A673 (cell line): ENCODE measurements at regions of chr22 and their contacts with region 1.

Region 1: DNA sequence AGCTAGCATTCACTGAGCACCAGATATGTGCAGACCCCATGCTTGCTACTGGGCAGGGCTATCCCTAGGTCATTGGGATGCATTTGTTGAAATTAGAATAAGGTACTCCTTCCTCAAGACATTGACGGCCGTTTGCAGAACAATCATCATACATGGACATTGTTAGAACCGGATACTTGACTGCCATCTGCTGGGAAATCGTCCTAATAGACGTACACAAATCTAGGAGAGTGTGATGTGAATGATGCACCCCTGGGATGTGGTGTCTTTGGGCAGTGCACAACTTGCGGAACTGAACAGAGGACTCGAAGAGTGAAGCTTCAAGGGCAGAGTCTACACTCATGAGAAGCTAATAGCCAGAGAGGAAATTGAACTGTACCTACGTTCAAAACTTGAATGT is 35.9 kb downstream of the MYO18B start:
- DNase-seq: peak; percentile 66
- H3K4me3 ChIP-seq: no peak overlapping the region
- H3K27ac ChIP-seq: no peak overlapping the region
- H3K4me1 ChIP-seq: peaks cover 5% of the 10 kb centered on the region
- H3K27me3 ChIP-seq: no peaks in the 10 kb centered on the region
- CTCF ChIP-seq: peak; percentile 53

Region 2: DNA sequence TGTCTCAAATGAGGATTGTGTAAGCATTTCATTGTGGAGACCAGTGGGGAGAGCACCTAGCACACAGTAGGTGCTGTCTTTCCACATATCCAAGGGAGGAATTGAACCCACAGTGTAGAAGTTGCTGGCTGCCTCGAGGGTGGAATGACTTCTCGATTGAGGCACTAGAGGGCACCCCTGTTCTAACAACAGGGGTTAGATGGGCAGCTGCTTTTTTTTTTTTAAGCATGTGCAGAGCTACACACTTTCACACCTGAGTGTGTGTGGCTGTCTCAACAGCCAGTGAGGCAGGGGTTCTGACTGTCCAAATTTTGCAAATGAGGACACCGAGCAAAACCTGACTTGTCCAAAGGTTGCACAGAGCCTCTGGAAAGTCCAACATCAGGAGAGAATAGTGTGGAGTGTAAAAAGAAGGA is 696.5 kb before region 1 on chr22:
- CTCF ChIA-PET with region 1: no interaction called
- POLR2A ChIA-PET with region 1: no interaction called
- intact Hi-C with region 1: no loop called
- DNase-seq: peak; percentile 47
- H3K4me3 ChIP-seq: no peak overlapping the region
- H3K27ac ChIP-seq: no peak overlapping the region
- H3K4me1 ChIP-seq: no peaks in the 10 kb centered on the region
- H3K27me3 ChIP-seq: no peaks in the 10 kb centered on the region
- CTCF ChIP-seq: peak; percentile 65

Region 3: GRCh38 chr22:25235547-25236290 is 542.2 kb before region 1 on chr22:
- CTCF ChIA-PET with region 1: no interaction called
- POLR2A ChIA-PET with region 1: no interaction called
- intact Hi-C with region 1: loop called (anchors 10 kb)
- DNase-seq: peak; percentile 84
- H3K4me3 ChIP-seq: no peak overlapping the region
- H3K27ac ChIP-seq: no peak overlapping the region
- H3K4me1 ChIP-seq: no peaks in the 10 kb centered on the region
- H3K27me3 ChIP-seq: no peaks in the 10 kb centered on the region
- CTCF ChIP-seq: peak; percentile 88

Region 4: GRCh38 chr22:25362215-25362882 is 415.5 kb before region 1 on chr22:
- CTCF ChIA-PET with region 1: no interaction called
- POLR2A ChIA-PET with region 1: no interaction called
- intact Hi-C with region 1: loop called (anchors 5 kb)
- DNase-seq: peak; percentile 67
- H3K4me3 ChIP-seq: no peak overlapping the region
- H3K27ac ChIP-seq: no peak overlapping the region
- H3K4me1 ChIP-seq: no peaks in the 10 kb centered on the region
- H3K27me3 ChIP-seq: no peaks in the 10 kb centered on the region
- CTCF ChIP-seq: peak; percentile 96

Region 5: DNA sequence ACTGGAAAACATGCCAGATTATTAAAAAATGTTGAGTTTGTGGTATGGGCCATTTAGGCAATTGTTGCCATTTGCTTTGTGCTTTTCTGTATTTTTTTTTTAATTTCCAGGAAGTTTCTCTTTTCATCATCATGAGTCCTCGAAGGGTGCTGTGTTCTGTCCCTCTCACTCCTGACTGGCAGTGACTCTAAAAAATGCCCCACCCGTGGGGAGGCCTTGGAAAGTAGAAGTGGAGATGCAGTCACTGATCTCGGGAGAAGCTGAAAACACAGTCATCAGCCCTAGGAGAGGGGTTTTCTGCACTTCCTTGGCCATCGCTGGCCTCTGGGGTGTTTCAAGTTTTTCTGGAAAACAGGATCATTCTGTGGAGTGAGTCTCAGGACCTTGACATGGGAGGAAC is 311.9 kb before region 1 on chr22:
- CTCF ChIA-PET with region 1: interaction called, 11 read pairs
- POLR2A ChIA-PET with region 1: no interaction called
- intact Hi-C with region 1: loop called (anchors 1 kb)
- DNase-seq: no peak
- H3K4me3 ChIP-seq: no peak overlapping the region
- H3K27ac ChIP-seq: no peak overlapping the region
- H3K4me1 ChIP-seq: no peaks in the 10 kb centered on the region
- H3K27me3 ChIP-seq: no peaks in the 10 kb centered on the region
- CTCF ChIP-seq: no peak

Region 6: GRCh38 chr22:26330966-26331625 is 553.2 kb after region 1 on chr22:
- CTCF ChIA-PET with region 1: interaction called, 3 read pairs
- POLR2A ChIA-PET with region 1: no interaction called
- intact Hi-C with region 1: loop called (anchors 2 kb)
- DNase-seq: peak; percentile 53
- H3K4me3 ChIP-seq: no peak overlapping the region
- H3K27ac ChIP-seq: no peak overlapping the region
- H3K4me1 ChIP-seq: no peaks in the 10 kb centered on the region
- H3K27me3 ChIP-seq: peaks cover 3% of the 10 kb centered on the region
- CTCF ChIP-seq: peak; percentile 90

Region 7: DNA sequence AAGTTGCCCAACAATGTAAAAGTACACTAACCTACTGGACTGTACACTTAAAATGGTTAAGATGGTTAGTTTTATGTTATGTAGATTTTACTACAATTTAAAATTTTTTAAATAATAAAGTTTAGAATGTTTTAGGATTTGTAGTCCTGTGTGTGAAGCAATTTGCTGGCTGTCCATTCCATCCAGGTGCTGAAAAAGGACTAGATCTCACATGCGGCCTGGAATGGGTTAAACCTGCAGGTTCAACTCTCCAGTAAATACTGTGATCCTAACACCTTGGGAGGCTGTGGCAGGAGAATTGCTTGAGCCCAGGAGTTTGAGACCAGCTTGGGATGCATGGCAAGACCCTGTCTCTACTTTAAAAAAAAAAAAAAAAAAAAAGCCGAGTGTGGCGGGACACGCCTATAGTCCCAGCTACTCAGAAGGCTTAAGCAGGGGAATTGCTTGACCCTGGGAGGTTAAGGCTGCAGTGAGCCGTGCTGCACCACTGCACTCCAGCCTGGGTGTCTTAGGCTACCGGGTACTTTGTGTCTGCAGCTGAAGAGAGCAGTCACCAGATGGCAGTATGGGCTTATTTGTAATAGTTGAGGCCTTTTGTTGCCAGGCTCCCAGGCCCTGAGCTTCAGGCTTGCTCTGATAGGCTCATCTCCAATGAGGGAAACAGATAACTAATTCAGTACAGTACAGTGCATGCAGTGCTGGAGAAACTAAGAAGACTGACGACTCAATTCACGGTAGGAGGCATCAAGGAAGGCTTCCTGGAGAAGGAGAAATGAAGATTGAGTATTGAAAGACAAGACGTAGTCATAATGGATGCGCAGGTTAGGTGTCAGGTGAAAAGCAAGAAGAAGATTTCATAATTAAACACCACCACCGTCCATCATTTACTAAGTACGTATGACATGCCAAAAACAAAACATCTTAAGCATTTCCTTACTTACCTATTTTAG is 586.5 kb after region 1 on chr22:
- CTCF ChIA-PET with region 1: no interaction called
- POLR2A ChIA-PET with region 1: no interaction called
- intact Hi-C with region 1: loop called (anchors 5 kb)
- DNase-seq: peak; percentile 87
- H3K4me3 ChIP-seq: no peak overlapping the region
- H3K27ac ChIP-seq: no peak overlapping the region
- H3K4me1 ChIP-seq: peaks cover 11% of the 10 kb centered on the region
- H3K27me3 ChIP-seq: peaks cover 12% of the 10 kb centered on the region
- CTCF ChIP-seq: peak; percentile 74